ENCODE measurements at regions of chr10 and their contacts with region 1.

Region 1: DNA sequence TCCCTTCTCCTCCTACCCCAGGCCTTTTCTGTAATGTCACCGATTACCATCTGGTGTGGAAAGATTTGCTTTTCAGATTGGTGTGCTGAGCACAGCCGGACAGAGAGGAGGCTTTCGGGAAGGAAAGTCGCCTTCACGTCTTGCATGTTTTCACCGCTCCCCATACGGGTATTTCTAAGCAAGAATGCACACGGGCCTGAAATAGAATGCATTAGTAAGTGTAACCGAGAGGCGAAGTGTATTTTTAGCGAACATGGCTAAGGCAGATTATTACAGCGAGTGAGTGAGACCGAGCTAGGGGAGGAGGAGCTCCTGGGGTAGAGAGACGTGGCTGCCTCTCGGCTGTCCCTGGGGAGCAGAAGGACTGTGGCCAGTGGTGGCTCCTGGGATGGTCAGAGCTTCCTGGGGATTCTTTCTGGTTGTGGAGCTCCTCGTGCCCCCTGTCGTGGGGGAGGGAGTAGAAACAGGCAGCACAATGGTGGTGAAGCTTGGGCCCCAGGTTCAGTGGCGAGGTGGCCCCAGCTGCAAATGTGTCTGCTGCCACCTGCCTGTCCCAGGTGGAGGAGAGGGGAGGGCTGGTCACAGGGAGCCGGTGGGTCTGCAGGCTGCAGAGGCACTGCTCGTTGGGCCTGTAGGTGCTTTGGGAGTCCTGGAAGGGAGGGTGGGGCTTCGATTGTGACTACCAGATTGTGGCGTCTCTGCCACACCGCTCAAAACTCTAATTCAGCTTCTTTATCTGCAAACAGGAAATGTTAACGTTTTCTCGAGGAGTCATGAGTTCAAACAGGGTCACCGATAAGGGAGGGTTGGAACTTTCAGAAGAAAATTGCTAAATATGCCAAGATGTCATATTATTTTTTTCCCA is 135.8 kb downstream of the CAMK1D start:
- DNase-seq: peak in 7 of 9 donors; percentile 13 to 38 (median 27)
- ATAC-seq: peak; percentile 70
- H3K4me3 ChIP-seq: no peak overlapping the region
- H3K4me3 Mint-ChIP-seq: peak overlapping the region; percentile 45 to 77 (median 71)
- H3K27ac ChIP-seq: no peak overlapping the region
- H3K27ac Mint-ChIP-seq: peak overlapping the region; percentile 61 to 90 (median 84)
- H3K4me1 ChIP-seq: peaks cover 0 to 24% of the 10 kb centered on the region in 2 donors
- H3K4me1 Mint-ChIP-seq: peaks cover 15 to 70% (median 47%) of the 10 kb centered on the region in 7 donors
- H3K27me3 ChIP-seq: no peaks in the 10 kb centered on the region
- H3K27me3 Mint-ChIP-seq: no peaks in the 10 kb centered on the region

Region 2: GRCh38 chr10:11724938-11725776 is 760.0 kb before region 1 on chr10:
- CTCF ChIA-PET with region 1: no interaction called
- POLR2A ChIA-PET with region 1: no interaction called
- intact Hi-C with region 1: no loop called
- DNase-seq: peak in 7 of 9 donors; percentile 25 to 61 (median 55)
- ATAC-seq: peak; percentile 81
- H3K4me3 ChIP-seq: no peak overlapping the region
- H3K4me3 Mint-ChIP-seq: peak overlapping the region in 1 of 10 donors; percentile 44
- H3K27ac ChIP-seq: no peak overlapping the region
- H3K27ac Mint-ChIP-seq: peak overlapping the region in 1 of 9 donors; percentile 13
- H3K4me1 ChIP-seq: no peaks in the 10 kb centered on the region
- H3K4me1 Mint-ChIP-seq: peaks cover 0 to 8% (median 5%) of the 10 kb centered on the region in 7 donors
- H3K27me3 ChIP-seq: no peaks in the 10 kb centered on the region
- H3K27me3 Mint-ChIP-seq: peaks cover 0 to 43% (median 5%) of the 10 kb centered on the region in 5 donors

Region 3: DNA sequence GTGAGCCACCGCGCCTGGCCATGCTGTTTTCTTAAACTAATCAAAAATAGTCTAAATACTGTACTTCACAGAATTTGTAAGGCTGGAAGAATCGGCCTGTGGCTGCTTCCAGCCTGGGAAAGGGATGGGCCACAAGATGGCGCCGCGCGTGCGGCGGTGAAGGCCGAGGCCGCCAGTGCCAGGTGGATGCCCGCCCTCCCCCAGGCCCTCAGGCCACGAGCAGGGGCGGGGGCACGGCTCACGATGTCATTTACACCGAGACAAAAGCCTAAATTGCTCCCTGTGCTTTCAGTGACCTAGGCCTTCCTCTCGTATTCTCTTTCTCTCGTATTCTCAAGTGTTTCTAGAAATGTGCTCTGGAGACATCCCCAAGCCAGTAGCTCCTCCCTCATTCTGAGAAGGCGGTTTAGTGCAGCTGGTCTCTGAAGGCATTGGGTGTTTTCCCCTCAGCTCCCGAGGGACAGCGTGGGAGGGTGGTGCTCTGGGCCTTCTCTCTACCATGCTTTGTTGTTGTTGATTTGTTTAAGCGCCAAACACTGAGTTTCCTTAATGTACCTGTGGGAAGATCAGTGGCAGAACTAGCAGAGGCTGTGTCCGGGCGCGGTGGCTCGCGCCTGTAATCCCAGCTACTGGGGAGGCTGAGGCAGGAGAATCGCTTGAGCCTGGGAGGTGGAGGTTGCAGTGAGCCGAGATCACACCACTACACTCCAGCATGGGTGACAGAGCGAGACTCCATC is 220.8 kb before region 1 on chr10:
- CTCF ChIA-PET with region 1: interaction called, 7 read pairs
- POLR2A ChIA-PET with region 1: no interaction called
- intact Hi-C with region 1: loop called (anchors 1 to 5 kb)
- DNase-seq: peak; percentile 45 to 75 (median 67)
- ATAC-seq: peak; percentile 73
- H3K4me3 ChIP-seq: peak overlapping the region; percentile 45
- H3K4me3 Mint-ChIP-seq: peak overlapping the region; percentile 58 to 81 (median 72)
- H3K27ac ChIP-seq: no peak overlapping the region
- H3K27ac Mint-ChIP-seq: peak overlapping the region in 7 of 9 donors; percentile 10 to 87 (median 51)
- H3K4me1 ChIP-seq: no peaks in the 10 kb centered on the region
- H3K4me1 Mint-ChIP-seq: peaks cover 0 to 26% (median 5%) of the 10 kb centered on the region in 7 donors
- H3K27me3 ChIP-seq: no peaks in the 10 kb centered on the region
- H3K27me3 Mint-ChIP-seq: no peaks in the 10 kb centered on the region

Region 4: GRCh38 chr10:12455774-12456173 is 29.4 kb before region 1 on chr10:
- CTCF ChIA-PET with region 1: no interaction called
- POLR2A ChIA-PET with region 1: no interaction called
- intact Hi-C with region 1: loop called in 1 of 2 experiments (anchors 1 kb)
- DNase-seq: no peak
- ATAC-seq: no peak
- H3K4me3 ChIP-seq: no peak overlapping the region
- H3K4me3 Mint-ChIP-seq: no peak overlapping the region
- H3K27ac ChIP-seq: no peak overlapping the region
- H3K27ac Mint-ChIP-seq: no peak overlapping the region
- H3K4me1 ChIP-seq: peaks cover 0 to under 1% of the 10 kb centered on the region in 2 donors
- H3K4me1 Mint-ChIP-seq: peaks cover 2 to 45% (median 26%) of the 10 kb centered on the region in 7 donors
- H3K27me3 ChIP-seq: no peaks in the 10 kb centered on the region
- H3K27me3 Mint-ChIP-seq: peaks cover 0 to 19% (median 0%) of the 10 kb centered on the region in 5 donors

Region 5: GRCh38 chr10:12466704-12467305 is 18.4 kb before region 1 on chr10:
- CTCF ChIA-PET with region 1: no interaction called
- POLR2A ChIA-PET with region 1: no interaction called
- intact Hi-C with region 1: no loop called
- DNase-seq: peak in 1 of 9 donors; percentile 3
- ATAC-seq: no peak
- H3K4me3 ChIP-seq: no peak overlapping the region
- H3K4me3 Mint-ChIP-seq: no peak overlapping the region
- H3K27ac ChIP-seq: no peak overlapping the region
- H3K27ac Mint-ChIP-seq: peak overlapping the region in 2 of 9 donors; percentile 40 to 59
- H3K4me1 ChIP-seq: no peaks in the 10 kb centered on the region
- H3K4me1 Mint-ChIP-seq: peaks cover 8 to 47% (median 38%) of the 10 kb centered on the region in 7 donors
- H3K27me3 ChIP-seq: no peaks in the 10 kb centered on the region
- H3K27me3 Mint-ChIP-seq: peaks cover 0 to 6% (median 0%) of the 10 kb centered on the region in 5 donors

Region 6: GRCh38 chr10:12531305-12532220 is 46.4 kb after region 1 on chr10:
- CTCF ChIA-PET with region 1: no interaction called
- POLR2A ChIA-PET with region 1: no interaction called
- intact Hi-C with region 1: no loop called
- DNase-seq: no peak
- ATAC-seq: no peak
- H3K4me3 ChIP-seq: no peak overlapping the region
- H3K4me3 Mint-ChIP-seq: no peak overlapping the region
- H3K27ac ChIP-seq: no peak overlapping the region
- H3K27ac Mint-ChIP-seq: no peak overlapping the region
- H3K4me1 ChIP-seq: no peaks in the 10 kb centered on the region
- H3K4me1 Mint-ChIP-seq: peaks cover 9 to 29% (median 20%) of the 10 kb centered on the region in 7 donors
- H3K27me3 ChIP-seq: no peaks in the 10 kb centered on the region
- H3K27me3 Mint-ChIP-seq: no peaks in the 10 kb centered on the region